Naive thymus-derived CD4-positive, alpha-beta T cell (primary cell): ENCODE measurements at regions of chr12 and their contacts with region 1.

Region 1: DNA sequence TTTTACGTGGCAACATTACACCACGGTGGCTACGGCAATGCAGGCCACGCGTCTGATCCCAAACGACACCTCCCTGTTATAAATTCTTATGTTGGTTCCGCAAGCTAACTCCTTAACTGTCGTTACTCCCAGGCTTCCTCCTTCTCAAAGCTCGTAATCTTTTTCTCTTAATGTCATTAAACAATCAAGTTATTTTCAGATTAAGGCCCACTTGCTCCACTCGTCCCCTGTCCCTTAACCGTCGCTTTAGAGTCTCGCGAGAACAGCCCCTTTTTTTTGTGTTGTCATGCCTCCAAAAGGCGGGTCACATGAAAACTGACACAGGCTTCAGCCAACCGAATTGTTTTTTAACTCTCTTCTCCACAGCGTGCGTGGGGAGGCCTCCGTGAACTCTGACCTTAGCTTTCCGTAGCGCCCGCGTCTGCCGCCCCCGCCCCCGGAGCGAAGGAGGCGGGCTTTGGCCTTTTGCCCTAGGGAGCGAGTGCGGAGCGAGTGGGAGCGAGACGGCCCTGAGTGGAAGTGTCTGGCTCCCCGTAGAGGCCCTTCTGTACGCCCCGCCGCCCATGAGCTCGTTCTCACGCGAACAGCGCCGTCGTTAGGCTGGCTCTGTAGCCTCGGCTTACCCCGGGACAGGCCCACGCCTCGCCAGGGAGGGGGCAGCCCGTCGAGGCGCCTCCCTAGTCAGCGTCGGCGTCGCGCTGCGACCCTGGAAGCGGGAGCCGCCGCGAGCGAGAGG is at the start of gene CAND1:
- DNase-seq: peak; percentile 93 to 99 (median 98)
- ATAC-seq: peak; percentile 89
- H3K4me3 ChIP-seq: peak within 1 kb of the TSS; percentile 69
- H3K4me3 Mint-ChIP-seq: peak within 1 kb of the TSS; percentile 80 to 99 (median 95)
- H3K27ac ChIP-seq: peak within 1 kb of the TSS; percentile 91
- H3K27ac Mint-ChIP-seq: peak within 1 kb of the TSS; percentile 97 to 100 (median 99)
- H3K4me1 ChIP-seq: peaks cover 22 to 26% of the 10 kb centered on the region in 2 donors
- H3K4me1 Mint-ChIP-seq: peaks cover 22 to 55% (median 52%) of the 10 kb centered on the region in 7 donors
- H3K27me3 ChIP-seq: no peaks in the 10 kb centered on the region
- H3K27me3 Mint-ChIP-seq: no peaks in the 10 kb centered on the region
- total RNA-seq, gene CAND1: 83.2 to 160 (median 111) TPM

Region 2: DNA sequence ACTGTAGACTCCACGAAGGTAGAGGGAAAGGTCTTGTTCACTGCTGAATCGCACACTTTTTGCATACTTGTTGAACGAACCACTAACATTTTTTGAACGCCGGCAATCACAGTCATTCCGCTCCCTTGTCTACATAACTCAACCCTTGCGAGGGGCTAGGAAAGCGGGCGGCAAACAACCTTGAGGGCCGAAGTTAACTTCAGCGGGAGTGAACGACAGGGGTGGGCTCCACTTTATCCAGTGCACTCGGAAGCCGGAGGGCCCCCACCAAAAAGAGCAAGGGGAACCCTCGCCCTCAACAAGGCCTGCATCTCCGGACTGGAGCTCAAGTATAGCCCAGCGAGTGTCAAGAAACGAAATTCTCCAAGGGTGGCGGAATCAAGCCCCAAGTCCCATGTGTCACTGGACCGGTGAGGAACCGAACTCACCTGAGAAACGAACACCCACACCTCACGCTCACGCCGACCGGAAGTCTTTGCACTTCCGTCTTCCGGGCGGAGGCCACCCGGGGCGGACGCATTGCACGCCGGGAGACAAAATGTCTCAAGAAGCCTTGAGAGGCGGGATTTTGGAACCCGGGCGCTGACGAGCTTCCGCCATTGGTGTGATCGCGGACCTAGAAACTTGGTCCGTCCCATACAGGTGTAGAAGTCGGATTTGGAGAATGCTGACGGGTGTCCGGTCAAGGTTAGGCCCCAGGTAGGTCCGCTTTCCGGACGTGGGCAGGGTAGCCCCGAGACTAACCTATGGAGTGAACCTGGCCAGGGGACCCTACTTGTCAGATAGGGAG is 1138.6 kb before region 1 on chr12 and contains the start of gene LLPH:
- CTCF ChIA-PET with region 1: no interaction called
- POLR2A ChIA-PET with region 1: interaction called, 3 read pairs
- intact Hi-C with region 1: loop called (anchors 1 to 2 kb)
- DNase-seq: peak; percentile 72 to 88 (median 86)
- ATAC-seq: peak; percentile 97
- H3K4me3 ChIP-seq: peak within 1 kb of the TSS; percentile 99
- H3K4me3 Mint-ChIP-seq: peak within 1 kb of the TSS; percentile 92 to 98 (median 97)
- H3K27ac ChIP-seq: peak within 1 kb of the TSS; percentile 87
- H3K27ac Mint-ChIP-seq: peak within 1 kb of the TSS; percentile 95 to 99 (median 97)
- H3K4me1 ChIP-seq: peaks cover 19 to 23% of the 10 kb centered on the region in 2 donors
- H3K4me1 Mint-ChIP-seq: peaks cover 37 to 76% (median 63%) of the 10 kb centered on the region in 7 donors
- H3K27me3 ChIP-seq: no peaks in the 10 kb centered on the region
- H3K27me3 Mint-ChIP-seq: no peaks in the 10 kb centered on the region
- total RNA-seq, gene LLPH: 14.7 to 29.1 (median 28.4) TPM

Region 3: DNA sequence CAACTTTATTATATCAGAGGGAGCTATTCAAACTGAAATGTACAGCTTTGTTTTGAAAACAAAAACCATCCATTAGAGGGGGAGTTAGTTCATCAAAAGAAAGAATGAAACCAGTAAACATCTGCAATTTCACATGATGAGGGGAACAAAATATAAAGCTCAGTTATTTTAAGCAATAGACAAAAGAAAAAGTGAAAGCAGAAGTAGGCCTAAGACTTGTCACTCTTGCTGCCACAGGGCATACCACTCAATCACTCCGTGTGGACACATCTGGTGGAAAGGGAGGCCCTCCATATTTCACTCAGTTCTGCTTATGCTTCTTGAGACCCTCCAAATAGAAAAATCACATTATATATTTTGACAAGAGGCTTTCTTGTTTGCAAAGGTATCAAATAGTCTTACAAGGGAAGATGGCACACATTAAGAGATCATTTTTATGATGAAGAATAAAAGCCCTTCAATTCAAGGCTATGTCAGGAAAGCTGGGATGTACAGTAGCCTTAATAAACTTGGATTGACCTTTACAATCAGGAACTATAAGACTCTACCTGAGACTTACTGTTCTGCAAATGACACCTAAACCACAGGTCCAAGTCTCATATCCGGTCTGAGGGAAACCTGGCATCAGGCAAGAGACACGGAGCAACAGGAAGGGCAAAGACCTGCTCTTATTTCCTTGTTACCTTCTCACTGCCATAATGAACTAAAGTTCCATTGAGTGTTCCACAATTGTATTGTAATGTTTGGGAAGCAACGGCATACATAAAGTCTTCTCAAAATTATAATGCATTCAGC is 367.7 kb before region 1 on chr12:
- CTCF ChIA-PET with region 1: no interaction called
- POLR2A ChIA-PET with region 1: interaction called, 7 read pairs
- intact Hi-C with region 1: loop called in 1 of 2 experiments (anchors 2 kb)
- DNase-seq: peak in 1 of 9 donors; percentile 4
- ATAC-seq: peak; percentile 69
- H3K4me3 ChIP-seq: no peak overlapping the region
- H3K4me3 Mint-ChIP-seq: peak overlapping the region in 9 of 10 donors; percentile 14 to 78 (median 69)
- H3K27ac ChIP-seq: peak overlapping the region; percentile 44
- H3K27ac Mint-ChIP-seq: peak overlapping the region in 8 of 9 donors; percentile 34 to 84 (median 67)
- H3K4me1 ChIP-seq: peaks cover 0 to 20% of the 10 kb centered on the region in 2 donors
- H3K4me1 Mint-ChIP-seq: peaks cover 14 to 52% (median 47%) of the 10 kb centered on the region in 7 donors
- H3K27me3 ChIP-seq: no peaks in the 10 kb centered on the region
- H3K27me3 Mint-ChIP-seq: peaks cover 0 to 4% (median 0%) of the 10 kb centered on the region in 5 donors

Region 4: GRCh38 chr12:67288561-67288960 is 19.5 kb after region 1 on chr12:
- CTCF ChIA-PET with region 1: no interaction called
- POLR2A ChIA-PET with region 1: interaction called, 15 read pairs
- intact Hi-C with region 1: loop called in 1 of 2 experiments (anchors 2 kb)
- DNase-seq: no peak
- ATAC-seq: no peak
- H3K4me3 ChIP-seq: no peak overlapping the region
- H3K4me3 Mint-ChIP-seq: peak overlapping the region in 1 of 10 donors; percentile 54
- H3K27ac ChIP-seq: no peak overlapping the region
- H3K27ac Mint-ChIP-seq: peak overlapping the region in 4 of 9 donors; percentile 14 to 67 (median 44)
- H3K4me1 ChIP-seq: peaks cover 0 to 10% of the 10 kb centered on the region in 2 donors
- H3K4me1 Mint-ChIP-seq: peaks cover 29 to 82% (median 71%) of the 10 kb centered on the region in 7 donors
- H3K27me3 ChIP-seq: no peaks in the 10 kb centered on the region
- H3K27me3 Mint-ChIP-seq: no peaks in the 10 kb centered on the region

Region 5: DNA sequence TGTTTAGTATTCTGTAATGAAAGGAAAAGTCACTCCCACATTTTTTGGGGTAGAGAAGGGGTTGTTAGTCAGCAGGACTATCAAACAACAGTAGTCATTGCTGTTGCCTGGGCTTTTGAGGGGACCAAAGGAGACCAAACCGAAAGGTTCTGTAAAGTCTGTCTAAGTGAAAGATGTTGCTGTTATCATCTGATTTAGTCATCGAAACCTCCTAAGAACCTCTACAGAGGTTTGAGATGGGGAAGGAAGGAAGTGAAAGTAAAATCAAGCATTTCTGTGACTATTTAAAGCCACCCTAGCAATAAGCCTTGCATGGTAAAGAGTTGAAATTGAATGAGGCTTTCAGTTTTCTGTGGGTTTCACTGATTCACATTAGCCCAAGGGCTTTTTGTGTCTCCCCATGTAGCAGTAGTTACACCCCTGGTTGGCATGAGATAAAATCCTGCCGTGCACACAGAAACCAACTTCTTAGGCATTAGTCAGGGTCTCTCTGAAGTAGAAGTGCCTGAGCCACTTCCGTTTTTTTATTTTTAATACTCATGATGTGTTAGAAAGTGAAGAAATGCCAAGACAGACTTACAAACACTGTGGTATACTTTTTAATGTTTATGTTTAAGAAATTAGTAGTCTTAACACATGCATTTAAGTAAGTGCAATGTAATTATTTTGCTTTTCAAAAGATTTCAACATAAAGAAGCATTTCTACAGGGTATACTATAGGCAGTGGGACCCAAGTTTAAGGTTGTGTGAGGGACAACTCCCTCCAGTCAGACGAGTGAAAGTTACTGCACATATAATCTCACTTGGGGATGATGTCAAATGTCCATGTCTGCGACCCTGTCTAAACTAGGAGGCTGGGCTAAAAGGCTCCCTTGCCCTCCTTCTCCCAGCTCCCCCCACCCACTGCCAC is 429.9 kb after region 1 on chr12:
- CTCF ChIA-PET with region 1: no interaction called
- POLR2A ChIA-PET with region 1: no interaction called
- intact Hi-C with region 1: loop called in 1 of 2 experiments (anchors 1 kb)
- DNase-seq: peak in 8 of 9 donors; percentile 26 to 55 (median 44)
- ATAC-seq: peak; percentile 82
- H3K4me3 ChIP-seq: peak overlapping the region; percentile 39
- H3K4me3 Mint-ChIP-seq: peak overlapping the region; percentile 71 to 86 (median 82)
- H3K27ac ChIP-seq: peak overlapping the region; percentile 62
- H3K27ac Mint-ChIP-seq: peak overlapping the region; percentile 58 to 91 (median 73)
- H3K4me1 ChIP-seq: peaks cover 20 to 24% of the 10 kb centered on the region in 2 donors
- H3K4me1 Mint-ChIP-seq: peaks cover 28 to 74% (median 60%) of the 10 kb centered on the region in 7 donors
- H3K27me3 ChIP-seq: no peaks in the 10 kb centered on the region
- H3K27me3 Mint-ChIP-seq: peaks cover 0 to 58% (median 0%) of the 10 kb centered on the region in 5 donors

Region 6: GRCh38 chr12:68331869-68332727 is 1063.0 kb after region 1 on chr12 and contains the start of gene MDM1:
- CTCF ChIA-PET with region 1: no interaction called
- POLR2A ChIA-PET with region 1: interaction called, 3 read pairs
- intact Hi-C with region 1: loop called in 1 of 2 experiments (anchors 1 kb)
- DNase-seq: peak; percentile 85 to 96 (median 95)
- ATAC-seq: peak; percentile 98
- H3K4me3 ChIP-seq: peak within 1 kb of the TSS; percentile 68
- H3K4me3 Mint-ChIP-seq: peak within 1 kb of the TSS; percentile 85 to 93 (median 91)
- H3K27ac ChIP-seq: peak within 1 kb of the TSS; percentile 73
- H3K27ac Mint-ChIP-seq: peak within 1 kb of the TSS; percentile 78 to 93 (median 90)
- H3K4me1 ChIP-seq: peaks cover 9 to 26% of the 10 kb centered on the region in 2 donors
- H3K4me1 Mint-ChIP-seq: peaks cover 33 to 61% (median 52%) of the 10 kb centered on the region in 7 donors
- H3K27me3 ChIP-seq: no peaks in the 10 kb centered on the region
- H3K27me3 Mint-ChIP-seq: peaks cover 0 to 15% (median 0%) of the 10 kb centered on the region in 5 donors
- total RNA-seq, gene MDM1: 16.2 to 38.4 (median 23.4) TPM

Region 7: GRCh38 chr12:69157023-69157655 is 1888.1 kb after region 1 on chr12:
- CTCF ChIA-PET with region 1: no interaction called
- POLR2A ChIA-PET with region 1: no interaction called
- intact Hi-C with region 1: loop called in 1 of 2 experiments (anchors 10 kb)
- DNase-seq: peak; percentile 71 to 93 (median 83)
- ATAC-seq: peak; percentile 97
- H3K4me3 ChIP-seq: peak overlapping the region; percentile 45
- H3K4me3 Mint-ChIP-seq: peak overlapping the region in 8 of 10 donors; percentile 47 to 75 (median 67)
- H3K27ac ChIP-seq: no peak overlapping the region
- H3K27ac Mint-ChIP-seq: peak overlapping the region in 2 of 9 donors; percentile 6 to 65
- H3K4me1 ChIP-seq: peaks cover 0 to 6% of the 10 kb centered on the region in 2 donors
- H3K4me1 Mint-ChIP-seq: peaks cover 8 to 34% (median 31%) of the 10 kb centered on the region in 7 donors
- H3K27me3 ChIP-seq: no peaks in the 10 kb centered on the region
- H3K27me3 Mint-ChIP-seq: no peaks in the 10 kb centered on the region